ENCODE measurements at regions of chr3 and their contacts with region 1.

Region 1: DNA sequence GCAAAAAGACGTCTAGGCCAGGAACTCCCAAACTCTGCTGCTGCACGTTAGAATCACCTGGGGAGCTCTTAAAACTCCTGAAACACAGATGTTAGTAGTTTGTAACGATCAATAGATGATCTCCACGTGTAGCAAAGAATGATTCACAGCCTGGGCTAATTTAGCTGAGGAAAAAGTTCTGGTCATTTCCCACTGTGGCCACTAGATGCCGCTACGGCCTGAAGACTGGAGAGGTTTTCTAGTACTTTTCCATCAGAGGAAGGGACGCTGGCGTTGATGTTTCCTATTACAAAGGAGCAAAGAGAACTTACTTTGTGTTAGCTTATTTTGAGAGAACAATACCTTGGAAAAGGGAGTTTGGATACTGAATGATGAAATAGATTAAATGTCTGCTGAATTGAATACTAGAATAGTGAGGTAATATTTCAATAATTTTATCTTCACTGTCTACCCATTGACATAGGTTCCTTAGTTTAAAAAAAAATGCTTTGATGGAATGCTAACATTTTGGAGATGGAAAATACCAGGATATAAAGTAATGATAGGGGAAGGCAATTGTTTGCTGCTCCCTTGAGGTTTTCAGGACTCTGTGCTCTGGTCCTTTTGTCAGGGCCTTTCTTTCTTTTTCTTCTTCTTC is 159.1 kb downstream of the P3H2 start:
- DNase-seq: peak; percentile 11 to 71 (median 57)
- ATAC-seq: peak; percentile 69
- H3K4me3 ChIP-seq: no peak overlapping the region
- H3K4me3 Mint-ChIP-seq: no peak overlapping the region
- H3K27ac ChIP-seq: no peak overlapping the region
- H3K27ac Mint-ChIP-seq: no peak overlapping the region
- H3K4me1 ChIP-seq: no peaks in the 10 kb centered on the region
- H3K4me1 Mint-ChIP-seq: peaks cover 4% of the 10 kb centered on the region
- H3K27me3 ChIP-seq: no peaks in the 10 kb centered on the region
- H3K27me3 Mint-ChIP-seq: peaks cover 23% of the 10 kb centered on the region
- CTCF ChIP-seq: peak; percentile 97

Region 2: GRCh38 chr3:189947948-189948723 is 13.5 kb before region 1 on chr3:
- CTCF ChIA-PET with region 1: interaction called, 60 read pairs
- POLR2A ChIA-PET with region 1: no interaction called
- intact Hi-C with region 1: no loop called
- DNase-seq: peak in 1 of 9 experiments; percentile 18
- ATAC-seq: no peak
- H3K4me3 ChIP-seq: no peak overlapping the region
- H3K4me3 Mint-ChIP-seq: no peak overlapping the region
- H3K27ac ChIP-seq: no peak overlapping the region
- H3K27ac Mint-ChIP-seq: no peak overlapping the region
- H3K4me1 ChIP-seq: no peaks in the 10 kb centered on the region
- H3K4me1 Mint-ChIP-seq: peaks cover 4% of the 10 kb centered on the region
- H3K27me3 ChIP-seq: no peaks in the 10 kb centered on the region
- H3K27me3 Mint-ChIP-seq: peaks cover 7% of the 10 kb centered on the region
- CTCF ChIP-seq: no peak

Region 3: GRCh38 chr3:189981668-189982067 is 20.0 kb after region 1 on chr3:
- CTCF ChIA-PET with region 1: interaction called, 12 read pairs
- POLR2A ChIA-PET with region 1: no interaction called
- intact Hi-C with region 1: no loop called
- DNase-seq: no peak
- ATAC-seq: no peak
- H3K4me3 ChIP-seq: no peak overlapping the region
- H3K4me3 Mint-ChIP-seq: no peak overlapping the region
- H3K27ac ChIP-seq: no peak overlapping the region
- H3K27ac Mint-ChIP-seq: no peak overlapping the region
- H3K4me1 ChIP-seq: no peaks in the 10 kb centered on the region
- H3K4me1 Mint-ChIP-seq: no peaks in the 10 kb centered on the region
- H3K27me3 ChIP-seq: peaks cover 0 to 4% of the 10 kb centered on the region in 2 experiments
- H3K27me3 Mint-ChIP-seq: peaks cover 15% of the 10 kb centered on the region
- CTCF ChIP-seq: no peak

Region 4: DNA sequence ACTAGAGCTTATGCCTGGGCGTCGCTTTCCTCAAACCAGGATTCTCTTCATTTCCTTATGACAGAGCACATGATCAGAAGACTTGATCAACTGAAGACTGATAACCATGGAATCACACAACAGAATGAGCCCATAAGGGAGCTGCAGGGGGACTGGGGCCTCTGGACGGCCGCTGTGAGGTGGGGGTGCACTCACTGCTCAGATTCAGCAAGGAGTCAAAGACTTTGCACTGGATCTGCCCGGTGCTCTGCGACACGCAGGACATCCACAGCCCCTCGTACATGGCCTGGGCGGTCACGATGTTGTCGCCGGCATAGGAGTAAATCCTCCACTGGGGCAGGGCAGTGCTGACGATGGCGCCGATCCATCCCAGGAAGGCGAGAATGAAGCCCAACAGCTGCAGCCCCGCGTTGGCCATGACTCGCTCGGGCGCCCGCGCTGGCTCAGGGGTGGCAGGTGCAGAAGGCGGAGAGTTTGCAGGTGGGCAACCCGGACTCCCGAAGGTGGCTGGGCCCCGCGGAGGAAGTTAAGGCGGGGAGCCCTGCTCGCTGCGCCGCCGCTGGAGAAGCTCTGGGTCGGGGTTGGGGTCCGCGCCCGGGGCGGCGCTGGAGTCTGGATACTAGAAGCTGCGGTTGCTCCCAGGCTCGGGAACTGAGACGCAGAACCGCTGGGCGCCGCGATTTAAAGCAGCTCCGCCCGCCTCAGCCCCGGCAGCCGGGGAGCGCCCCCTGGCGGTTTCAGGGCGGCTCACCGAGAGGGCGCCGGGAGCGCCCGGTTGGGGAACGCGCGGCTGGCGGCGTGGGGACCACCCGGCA is 360.4 kb after region 1 on chr3 and contains the start of gene CLDN1:
- CTCF ChIA-PET with region 1: interaction called, 34 read pairs
- POLR2A ChIA-PET with region 1: no interaction called
- intact Hi-C with region 1: loop called in 1 of 2 experiments (anchors 1 kb)
- DNase-seq: peak; percentile 35 to 84 (median 68)
- ATAC-seq: peak; percentile 91
- H3K4me3 ChIP-seq: peak within 1 kb of the TSS; percentile 42 to 56
- H3K4me3 Mint-ChIP-seq: peak within 1 kb of the TSS; percentile 68
- H3K27ac ChIP-seq: no peak within 1 kb of the TSS
- H3K27ac Mint-ChIP-seq: no peak within 1 kb of the TSS
- H3K4me1 ChIP-seq: peaks cover 13% of the 10 kb centered on the region
- H3K4me1 Mint-ChIP-seq: peaks cover 14% of the 10 kb centered on the region
- H3K27me3 ChIP-seq: peaks cover 4 to 6% of the 10 kb centered on the region in 2 experiments
- H3K27me3 Mint-ChIP-seq: peaks cover 32% of the 10 kb centered on the region
- CTCF ChIP-seq: peak; percentile 82
- total RNA-seq, gene CLDN1: not detected

Region 5: GRCh38 chr3:190696777-190697501 is 735.3 kb after region 1 on chr3:
- CTCF ChIA-PET with region 1: no interaction called
- POLR2A ChIA-PET with region 1: no interaction called
- intact Hi-C with region 1: loop called in 1 of 2 experiments (anchors 10 kb)
- DNase-seq: peak in 2 of 9 experiments; percentile 4 to 5
- ATAC-seq: no peak
- H3K4me3 ChIP-seq: no peak overlapping the region
- H3K4me3 Mint-ChIP-seq: no peak overlapping the region
- H3K27ac ChIP-seq: no peak overlapping the region
- H3K27ac Mint-ChIP-seq: no peak overlapping the region
- H3K4me1 ChIP-seq: no peaks in the 10 kb centered on the region
- H3K4me1 Mint-ChIP-seq: no peaks in the 10 kb centered on the region
- H3K27me3 ChIP-seq: peaks cover 0 to 5% of the 10 kb centered on the region in 2 experiments
- H3K27me3 Mint-ChIP-seq: peaks cover 15% of the 10 kb centered on the region
- CTCF ChIP-seq: no peak